Right lobe of liver (tissue), 6 donors: ENCODE measurements at regions of chr11 and their contacts with region 1.

Region 1: DNA sequence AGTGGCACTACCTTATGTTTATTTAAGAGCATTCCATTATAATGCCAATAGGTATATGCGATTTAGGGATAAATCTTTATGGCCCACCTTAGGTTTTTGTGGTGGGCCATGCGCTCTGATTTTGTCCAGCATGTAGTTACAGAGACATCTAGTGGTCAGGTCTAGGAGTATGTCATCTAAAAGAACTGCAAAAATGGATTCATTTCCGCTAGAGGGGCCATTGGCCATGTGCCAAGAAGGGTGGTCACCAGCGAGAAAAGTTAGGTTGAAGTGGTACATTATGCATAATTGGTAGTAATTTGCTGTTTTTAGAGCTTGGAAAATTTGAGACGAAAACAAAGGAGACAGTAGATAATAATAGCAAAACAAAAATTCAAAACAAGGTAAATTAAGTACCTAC is 27.7 kb downstream of the LRRC4C start:
- DNase-seq: peak in 1 of 3 donors; percentile 43
- ATAC-seq: peak in 3 of 4 donors; percentile 40 to 54 (median 52)
- H3K4me3 ChIP-seq: no peak overlapping the region
- H3K27ac ChIP-seq: no peak overlapping the region
- H3K4me1 ChIP-seq: no peaks in the 10 kb centered on the region
- H3K27me3 ChIP-seq: no peaks in the 10 kb centered on the region
- CTCF ChIP-seq: peak; percentile 61 to 72 (median 65)
- POLR2A ChIP-seq: no peak

Region 2: DNA sequence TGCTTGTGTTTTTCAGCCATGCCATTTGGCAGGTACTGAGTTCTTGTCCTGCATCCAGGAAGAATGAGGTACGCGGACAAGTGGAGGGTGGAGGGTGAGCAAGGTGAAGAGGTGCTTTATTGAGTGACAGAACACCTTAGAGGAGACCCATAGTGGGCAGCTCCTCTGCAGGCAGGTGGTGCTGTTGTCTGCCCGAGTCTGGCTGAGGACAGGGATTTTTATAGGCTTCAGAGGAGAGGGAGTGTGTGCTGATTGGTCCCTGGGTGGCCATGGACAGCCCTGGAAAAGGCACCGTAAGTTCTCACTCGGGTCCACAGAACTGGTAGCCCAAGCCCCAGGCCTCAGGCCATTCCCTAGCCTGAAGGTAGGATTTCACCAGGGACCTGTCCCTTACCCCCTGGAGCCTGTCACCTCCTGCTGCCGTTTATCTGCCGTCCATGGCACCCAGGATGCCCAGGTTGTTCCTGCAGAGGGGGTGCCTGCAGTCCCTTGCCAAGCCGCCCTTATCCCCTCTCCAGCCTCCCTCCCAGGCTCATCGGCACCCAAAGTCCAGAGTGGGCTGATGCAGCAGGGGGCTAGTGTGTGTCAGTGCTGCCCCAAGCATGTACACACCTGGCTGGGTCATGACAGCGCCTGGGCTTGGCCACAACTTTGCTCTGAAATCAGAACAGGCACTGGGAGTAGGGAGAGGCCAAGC is 185.9 kb before region 1 on chr11:
- intact Hi-C with region 1: loop called in 1 of 2 experiments (anchors 10 kb)
- DNase-seq: peak; percentile 23 to 42 (median 39)
- ATAC-seq: peak; percentile 59 to 75 (median 66)
- H3K4me3 ChIP-seq: no peak overlapping the region
- H3K27ac ChIP-seq: no peak overlapping the region
- H3K4me1 ChIP-seq: no peaks in the 10 kb centered on the region
- H3K27me3 ChIP-seq: no peaks in the 10 kb centered on the region
- CTCF ChIP-seq: peak in 3 of 4 donors; percentile 26 to 41 (median 29)
- POLR2A ChIP-seq: no peak

Region 3: DNA sequence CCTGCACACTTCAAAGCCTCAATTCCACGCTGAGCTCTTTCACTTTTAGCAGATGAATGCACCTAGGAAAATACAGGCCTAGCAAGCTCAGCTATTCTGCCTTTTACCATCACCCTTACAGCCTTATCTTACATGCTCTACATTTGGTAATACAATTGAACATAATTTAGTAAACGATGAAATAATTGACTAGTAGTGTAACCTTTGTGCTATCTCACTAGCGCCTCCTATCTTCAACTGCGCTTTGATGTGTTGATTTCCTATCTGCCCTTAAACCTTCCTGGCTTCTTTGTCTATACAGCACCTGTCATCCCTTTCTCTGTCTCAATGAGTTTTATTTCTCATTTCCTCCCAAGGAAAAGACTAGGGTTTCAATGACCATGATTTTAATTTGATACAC is 122.1 kb before region 1 on chr11:
- intact Hi-C with region 1: no loop called
- DNase-seq: no peak
- ATAC-seq: no peak
- H3K4me3 ChIP-seq: no peak overlapping the region
- H3K27ac ChIP-seq: no peak overlapping the region
- H3K4me1 ChIP-seq: no peaks in the 10 kb centered on the region
- H3K27me3 ChIP-seq: no peaks in the 10 kb centered on the region
- CTCF ChIP-seq: no peak
- POLR2A ChIP-seq: no peak

Region 4: DNA sequence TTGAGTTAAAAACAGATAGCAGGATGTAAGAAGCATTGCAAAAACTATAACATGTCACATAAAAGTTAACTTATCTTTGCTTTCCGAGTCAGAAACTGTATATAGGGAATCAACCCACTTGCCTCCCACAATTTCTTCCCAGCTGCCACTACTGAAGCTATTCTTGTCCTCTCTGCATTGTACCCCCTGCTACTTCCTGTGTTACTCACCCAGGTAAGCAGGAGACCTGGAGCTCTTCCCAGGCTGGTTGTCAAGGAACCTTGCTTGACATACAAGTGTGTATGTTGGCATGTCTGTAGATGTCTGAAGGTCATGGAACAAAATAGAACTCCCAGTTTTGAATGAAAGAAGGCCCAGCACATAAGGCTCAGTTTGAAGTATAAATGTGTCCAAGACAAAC is 102.0 kb after region 1 on chr11:
- intact Hi-C with region 1: no loop called
- DNase-seq: no peak
- ATAC-seq: no peak
- H3K4me3 ChIP-seq: no peak overlapping the region
- H3K27ac ChIP-seq: no peak overlapping the region
- H3K4me1 ChIP-seq: no peaks in the 10 kb centered on the region
- H3K27me3 ChIP-seq: no peaks in the 10 kb centered on the region
- CTCF ChIP-seq: no peak
- POLR2A ChIP-seq: no peak